K562 (cell line): ENCODE measurements at regions of chr1 and their contacts with region 1.

Region 1: DNA sequence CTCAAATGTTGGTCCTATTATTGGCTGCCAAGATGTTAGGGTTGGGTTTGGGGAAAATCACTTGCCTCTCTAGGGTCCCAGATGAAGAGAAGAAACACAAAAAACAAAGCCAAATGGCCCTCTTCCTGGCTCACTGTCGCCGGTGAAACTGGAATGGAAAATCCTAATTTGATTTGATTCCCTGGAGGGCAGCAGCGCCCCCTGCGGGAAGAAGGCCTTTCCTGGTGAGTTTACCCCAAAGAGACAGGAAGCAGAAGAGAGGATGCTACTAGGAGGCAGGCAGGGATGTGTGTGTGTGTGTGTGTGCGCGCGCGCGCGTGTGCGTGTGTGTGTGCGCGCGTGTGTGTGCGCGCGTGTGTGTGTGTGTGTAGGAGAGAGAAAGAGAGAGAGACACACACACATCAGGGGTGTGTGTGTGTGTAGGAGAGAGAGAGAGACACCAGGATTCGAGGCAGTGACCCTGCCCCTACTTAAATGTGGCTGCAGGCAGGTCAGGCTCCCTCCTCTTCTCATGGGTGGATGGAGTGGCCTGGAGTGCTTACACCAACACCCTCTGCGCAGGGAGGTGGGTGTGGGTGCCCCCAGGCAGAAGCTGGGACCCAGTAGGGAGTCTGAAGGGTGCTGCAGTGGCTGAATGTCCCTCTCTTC is 3.1 kb upstream of the SELENON start:
- DNase-seq: peak; percentile 78 to 88 (median 81)
- ATAC-seq: peak; percentile 74
- H3K4me3 ChIP-seq: no peak overlapping the region
- H3K27ac ChIP-seq: no peak overlapping the region
- H3K4me1 ChIP-seq: peaks cover 9 to 20% of the 10 kb centered on the region in 2 experiments; a peak in 3 of 5 replicates
- H3K27me3 ChIP-seq: peaks cover 21 to 42% of the 10 kb centered on the region in 2 experiments
- CTCF ChIP-seq: peak; percentile 88 to 95 (median 89)
- EP300 ChIP-seq: 0 out of 2 replicates have a peak, but pooled peaks have one; percentile 12
- POLR2A ChIP-seq: no peak
- RAD21 ChIP-seq: peak; percentile 88 to 97

Region 2: GRCh38 chr1:25543425-25544242 is 253.3 kb before region 1 on chr1 and contains the start of gene LDLRAP1:
- CTCF ChIA-PET with region 1: no interaction called
- POLR2A ChIA-PET with region 1: no interaction called
- in situ Hi-C with region 1: no loop called
- intact Hi-C with region 1: loop called (anchors 5 kb)
- DNase-seq: peak; percentile 88 to 99 (median 98)
- ATAC-seq: peak; percentile 97
- H3K4me3 ChIP-seq: peak within 1 kb of the TSS; percentile 82
- H3K27ac ChIP-seq: peak within 1 kb of the TSS; percentile 78
- H3K4me1 ChIP-seq: peaks cover 34 to 36% of the 10 kb centered on the region in 2 experiments
- H3K27me3 ChIP-seq: no peaks in the 10 kb centered on the region
- CTCF ChIP-seq: peak in 2 of 3 experiments; percentile 14 to 21; a peak in 1 of 6 replicates
- EP300 ChIP-seq: no peak
- POLR2A ChIP-seq: no peak
- RAD21 ChIP-seq: no peak
- polyA plus RNA-seq, gene LDLRAP1: 0.56 to 1.4 TPM

Region 3: GRCh38 chr1:25572708-25573600 is 224.0 kb before region 1 on chr1:
- CTCF ChIA-PET with region 1: no interaction called
- POLR2A ChIA-PET with region 1: no interaction called
- in situ Hi-C with region 1: no loop called
- intact Hi-C with region 1: no loop called
- DNase-seq: peak; percentile 77 to 85 (median 80)
- ATAC-seq: peak; percentile 89
- H3K4me3 ChIP-seq: no peak overlapping the region
- H3K27ac ChIP-seq: no peak overlapping the region
- H3K4me1 ChIP-seq: peaks cover 24 to 44% of the 10 kb centered on the region in 2 experiments
- H3K27me3 ChIP-seq: peaks cover 8 to 41% of the 10 kb centered on the region in 2 experiments; a peak in 4 of 5 replicates
- CTCF ChIP-seq: peak; percentile 74 to 84 (median 80)
- EP300 ChIP-seq: no peak
- POLR2A ChIP-seq: no peak
- RAD21 ChIP-seq: peak in 1 of 2 experiments; percentile 54; a peak in 2 of 4 replicates

Region 4: GRCh38 chr1:25608488-25609178 is 188.3 kb before region 1 on chr1:
- CTCF ChIA-PET with region 1: interaction called, 15 read pairs
- POLR2A ChIA-PET with region 1: interaction called, 3 read pairs
- in situ Hi-C with region 1: loop called (anchors 5 kb)
- intact Hi-C with region 1: loop called (anchors 1 kb)
- DNase-seq: peak; percentile 82 to 93 (median 86)
- ATAC-seq: peak; percentile 99
- H3K4me3 ChIP-seq: peak overlapping the region; percentile 28
- H3K27ac ChIP-seq: no peak overlapping the region
- H3K4me1 ChIP-seq: peaks cover 2 to 3% of the 10 kb centered on the region in 2 experiments; a peak in 2 of 5 replicates
- H3K27me3 ChIP-seq: peaks cover 10 to 28% of the 10 kb centered on the region in 2 experiments
- CTCF ChIP-seq: peak; percentile 76 to 82 (median 79)
- EP300 ChIP-seq: no peak
- POLR2A ChIP-seq: no peak
- RAD21 ChIP-seq: peak; percentile 87 to 88

Region 5: DNA sequence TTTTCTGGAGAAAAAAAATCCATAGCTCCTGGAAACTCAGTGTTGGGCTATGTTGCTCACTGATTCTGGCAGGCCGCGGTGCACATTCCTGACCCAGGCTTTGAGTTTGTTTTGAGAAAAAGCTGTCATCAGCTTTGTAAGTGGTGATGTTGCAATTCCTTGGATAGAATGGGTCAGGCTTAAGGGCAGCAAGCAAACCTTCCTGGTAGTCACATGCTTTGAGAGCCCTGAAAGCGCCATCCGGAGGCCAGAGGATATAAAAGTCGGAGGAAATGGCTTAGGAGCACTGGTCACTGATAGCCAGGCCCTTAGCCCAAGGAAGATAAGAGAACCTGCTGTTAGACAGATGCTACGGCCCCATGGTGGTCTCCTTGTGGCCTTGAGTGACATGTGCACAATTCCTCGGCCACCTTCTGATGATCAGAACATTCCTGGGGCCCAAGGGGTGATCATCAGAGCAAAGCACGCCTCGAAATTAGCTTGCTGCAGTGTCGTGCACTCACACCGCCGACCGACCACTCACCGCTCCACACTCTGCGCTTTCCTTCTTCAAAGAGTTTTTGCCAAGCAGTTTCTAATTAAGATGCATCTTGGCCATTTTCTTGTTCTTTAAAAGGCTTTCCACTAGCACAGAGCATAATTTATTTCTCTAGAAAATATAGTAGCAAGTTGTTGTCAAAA is 101.7 kb before region 1 on chr1:
- CTCF ChIA-PET with region 1: interaction called, 3 read pairs
- POLR2A ChIA-PET with region 1: no interaction called
- in situ Hi-C with region 1: no loop called
- intact Hi-C with region 1: loop called (anchors 5 kb)
- DNase-seq: peak; percentile 37 to 66 (median 48)
- ATAC-seq: peak; percentile 88
- H3K4me3 ChIP-seq: no peak overlapping the region
- H3K27ac ChIP-seq: no peak overlapping the region
- H3K4me1 ChIP-seq: peaks cover 4 to 7% of the 10 kb centered on the region in 2 experiments; a peak in 4 of 5 replicates
- H3K27me3 ChIP-seq: peaks cover 31 to 88% of the 10 kb centered on the region in 2 experiments
- CTCF ChIP-seq: peak; percentile 28 to 53 (median 51); a peak in 5 of 6 replicates
- EP300 ChIP-seq: peak; percentile 10; the same call in 1 of the 2 replicates
- POLR2A ChIP-seq: no peak
- RAD21 ChIP-seq: peak; percentile 54 to 72

Region 6: DNA sequence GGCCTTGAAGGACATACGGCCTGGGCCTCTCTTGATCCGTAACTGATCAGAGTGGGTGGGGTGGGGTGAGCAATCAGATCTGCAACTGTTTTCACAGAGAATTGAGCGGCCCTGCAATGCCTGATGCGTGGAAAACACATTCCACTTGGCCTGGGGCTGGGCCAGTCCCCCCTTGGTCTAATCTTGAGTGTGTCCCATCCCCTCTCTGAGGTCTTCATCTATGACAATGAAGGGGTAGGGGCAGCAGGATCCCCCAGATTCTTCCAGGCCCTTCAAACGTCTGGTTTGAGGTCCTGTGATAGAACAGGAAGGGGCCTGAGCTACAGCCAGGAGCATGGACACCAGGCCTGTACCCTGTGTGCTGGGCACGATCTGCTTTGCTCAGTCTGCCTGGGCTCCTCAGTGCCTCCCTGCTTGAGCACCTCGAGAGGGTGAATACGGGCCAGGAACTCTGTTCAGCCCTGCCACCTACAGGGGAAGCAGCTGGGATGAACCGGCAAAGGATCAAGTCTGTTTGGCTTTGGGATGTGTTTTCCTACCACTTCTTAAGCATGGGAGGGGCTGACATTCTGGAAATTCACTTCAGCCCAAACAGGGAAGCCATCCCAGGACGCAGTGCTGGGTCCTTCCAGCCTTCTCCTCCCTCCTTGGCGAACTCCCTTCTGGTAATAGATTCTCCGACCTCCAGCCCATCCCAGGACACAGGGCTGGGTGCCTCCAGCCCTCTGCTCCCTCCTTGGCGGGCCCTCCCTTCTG is 52.9 kb before region 1 on chr1:
- CTCF ChIA-PET with region 1: no interaction called
- POLR2A ChIA-PET with region 1: no interaction called
- in situ Hi-C with region 1: loop called (anchors 5 kb)
- intact Hi-C with region 1: loop called (anchors 10 kb)
- DNase-seq: peak in 1 of 4 experiments; percentile 27
- ATAC-seq: peak; percentile 67
- H3K4me3 ChIP-seq: no peak overlapping the region
- H3K27ac ChIP-seq: no peak overlapping the region
- H3K4me1 ChIP-seq: peaks cover 0 to 6% of the 10 kb centered on the region in 2 experiments; a peak in 1 of 5 replicates
- H3K27me3 ChIP-seq: peaks cover 76 to 94% of the 10 kb centered on the region in 2 experiments
- CTCF ChIP-seq: peak; percentile 28 to 52 (median 30); a peak in 4 of 6 replicates
- EP300 ChIP-seq: no peak
- POLR2A ChIP-seq: no peak
- RAD21 ChIP-seq: peak in 1 of 2 experiments; percentile 55; a peak in 2 of 4 replicates

Region 7: GRCh38 chr1:25758466-25759077 is 38.4 kb before region 1 on chr1:
- CTCF ChIA-PET with region 1: interaction called, 10 read pairs
- POLR2A ChIA-PET with region 1: interaction called, 3 read pairs
- in situ Hi-C with region 1: no loop called
- intact Hi-C with region 1: loop called (anchors 2 kb)
- DNase-seq: no peak
- ATAC-seq: peak; percentile 41; the same call in 2 of the 3 replicates
- H3K4me3 ChIP-seq: no peak overlapping the region
- H3K27ac ChIP-seq: no peak overlapping the region
- H3K4me1 ChIP-seq: peaks cover 10 to 12% of the 10 kb centered on the region in 2 experiments
- H3K27me3 ChIP-seq: peaks cover 48 to 72% of the 10 kb centered on the region in 2 experiments
- CTCF ChIP-seq: peak in 2 of 3 experiments; percentile 19 to 27; a peak in 3 of 6 replicates
- EP300 ChIP-seq: no peak
- POLR2A ChIP-seq: no peak
- RAD21 ChIP-seq: peak in 1 of 2 experiments; percentile 36; a peak in 2 of 4 replicates